ENCODE measurements at regions of chr5 and their contacts with region 1.

Region 1: GRCh38 chr5:172399821-172400220 is 54.5 kb downstream of the SH3PXD2B start:
- DNase-seq: no peak

Region 2: DNA sequence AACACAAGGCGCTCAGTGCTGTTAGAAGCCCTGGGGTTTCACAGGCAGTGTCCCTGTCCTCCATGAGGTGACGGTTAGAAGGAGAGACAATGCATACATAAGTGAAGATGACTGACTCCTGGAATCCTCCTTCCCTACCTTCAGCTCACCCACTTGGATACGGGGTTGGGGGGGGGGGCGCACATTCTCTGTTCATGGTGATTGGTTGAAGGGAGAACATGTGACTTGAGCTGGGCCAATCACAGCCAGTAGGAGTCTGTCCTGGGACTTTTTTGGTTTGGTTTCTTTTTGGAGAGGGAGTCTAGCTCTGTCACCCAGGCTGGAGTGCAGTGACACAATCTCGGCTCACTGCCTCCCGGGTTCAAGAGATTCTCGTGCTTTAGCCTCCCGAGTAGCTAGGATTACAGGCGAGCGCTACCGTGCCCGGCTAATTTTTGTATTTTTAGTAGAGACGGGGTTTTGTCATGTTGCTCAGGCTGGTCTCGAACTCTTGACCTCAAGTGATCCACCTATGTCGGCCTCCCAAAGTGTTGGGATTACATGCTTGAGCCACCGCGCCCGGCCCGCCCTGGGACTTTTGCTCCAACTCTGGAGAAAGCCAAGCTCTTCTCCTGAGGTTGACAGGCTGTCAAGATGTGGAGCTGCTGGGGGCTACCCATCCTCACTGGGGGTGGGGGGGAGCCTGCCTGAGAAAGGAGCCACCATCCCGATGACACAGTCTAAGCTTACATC is 23.7 kb after region 1 on chr5:
- intact Hi-C with region 1: loop called in 1 of 2 experiments (anchors 2 kb)
- DNase-seq: no peak

Region 3: GRCh38 chr5:172454358-172455086 is 54.7 kb after region 1 on chr5 and contains the start of gene SH3PXD2B:
- intact Hi-C with region 1: no loop called
- DNase-seq: peak; percentile 86
- total RNA-seq, gene SH3PXD2B: 85.2 to 114 TPM

Measured in posterior vena cava (tissue), 2 donors.